OCI-LY7 (cell line): ENCODE measurements at regions of chr7 and their contacts with region 1.

Region 1: DNA sequence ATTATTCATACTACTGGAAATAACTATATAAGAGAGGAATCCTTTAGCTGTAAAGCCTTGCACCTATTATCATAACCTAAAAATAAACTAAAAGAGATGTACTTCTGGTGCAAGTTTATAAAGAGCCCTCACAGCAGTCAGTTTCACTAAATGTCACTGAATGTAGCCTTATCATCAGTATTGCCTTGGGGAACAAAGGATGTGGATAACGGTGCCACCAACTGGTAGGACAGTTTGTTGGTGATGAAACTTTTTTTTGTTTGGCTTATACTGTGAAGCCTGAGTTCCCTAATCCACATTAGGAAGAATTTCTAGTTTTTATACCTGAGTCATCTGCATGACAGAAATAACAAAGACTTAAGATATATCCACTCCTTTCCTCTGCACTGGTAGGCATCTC is 117.9 kb upstream of the COL1A2 start:
- DNase-seq: peak; percentile 38
- H3K4me3 ChIP-seq: no peak overlapping the region
- H3K27ac ChIP-seq: no peak overlapping the region
- H3K4me1 ChIP-seq: no peaks in the 10 kb centered on the region
- CTCF ChIP-seq: peak; percentile 69

Region 2: DNA sequence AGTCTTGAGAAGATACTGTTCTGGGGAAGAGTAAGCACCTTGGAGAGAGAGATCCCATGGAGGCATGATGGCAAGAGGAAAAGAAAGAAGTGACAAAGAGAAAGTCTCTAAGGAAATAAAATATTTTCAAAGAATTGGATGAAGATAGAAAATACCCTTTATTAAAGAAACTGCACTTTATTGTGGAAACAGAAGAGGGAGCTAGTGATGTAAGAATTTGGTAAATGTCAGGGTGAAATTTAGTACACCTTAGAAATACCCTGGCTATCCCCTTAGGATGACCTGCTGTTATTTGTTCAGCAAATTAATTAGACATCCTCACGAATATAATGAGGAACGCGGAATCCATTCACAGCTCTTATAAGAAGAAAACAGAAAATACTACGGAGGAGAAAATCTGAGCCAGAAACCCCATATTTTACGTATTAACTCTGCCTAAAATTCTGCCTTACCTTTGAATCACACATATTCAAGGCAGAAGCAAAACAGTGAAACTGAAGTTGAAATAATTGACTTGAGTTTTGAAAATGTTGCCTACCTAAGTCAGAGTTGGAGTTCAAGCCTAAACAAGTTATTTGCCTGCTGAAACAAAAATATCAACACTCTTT is 476.9 kb before region 1 on chr7:
- CTCF ChIA-PET with region 1: no interaction called
- POLR2A ChIA-PET with region 1: interaction called, 3 read pairs
- intact Hi-C with region 1: loop called (anchors 2 kb)
- DNase-seq: peak; percentile 29
- H3K4me3 ChIP-seq: no peak overlapping the region
- H3K27ac ChIP-seq: no peak overlapping the region
- H3K4me1 ChIP-seq: no peaks in the 10 kb centered on the region
- CTCF ChIP-seq: peak; percentile 83

Region 3: DNA sequence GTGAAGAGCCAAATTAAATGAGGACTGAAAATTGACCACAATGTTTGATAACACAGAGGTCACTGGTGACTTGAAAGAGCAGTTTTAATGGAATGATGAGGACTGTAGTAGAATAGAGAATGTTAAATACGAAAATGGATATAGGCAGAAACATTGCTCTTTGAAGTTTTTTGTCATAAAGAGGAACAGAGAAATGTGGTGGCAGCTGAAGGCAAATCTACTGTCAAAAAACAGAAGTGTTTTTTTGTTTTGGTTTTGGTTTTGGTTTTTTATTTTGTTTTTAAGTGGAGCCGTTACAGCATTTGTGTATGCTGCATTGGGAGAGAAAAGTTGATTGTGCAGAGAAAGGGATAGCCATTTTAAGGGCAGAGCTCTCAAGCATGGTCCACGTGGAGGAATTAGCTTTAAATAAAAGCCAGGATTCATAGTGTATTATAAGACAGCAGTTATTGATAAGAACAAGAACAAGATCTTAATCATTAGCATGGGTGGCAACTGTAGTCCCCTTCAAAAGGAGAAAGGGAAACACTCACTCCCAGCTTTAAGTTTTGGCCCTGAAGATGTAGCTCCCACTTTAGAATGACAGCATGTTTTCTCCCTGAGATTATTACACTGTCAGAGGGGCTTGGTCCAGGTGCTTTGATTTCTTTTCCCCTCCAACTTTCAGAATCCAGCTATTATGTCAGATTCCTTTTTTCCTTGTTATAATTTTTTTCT is 115.9 kb before region 1 on chr7:
- CTCF ChIA-PET with region 1: no interaction called
- POLR2A ChIA-PET with region 1: no interaction called
- intact Hi-C with region 1: no loop called
- DNase-seq: peak; percentile 90
- H3K4me3 ChIP-seq: peak overlapping the region; percentile 53
- H3K27ac ChIP-seq: peak overlapping the region; percentile 91
- H3K4me1 ChIP-seq: peaks cover 38% of the 10 kb centered on the region
- CTCF ChIP-seq: no peak

Region 4: DNA sequence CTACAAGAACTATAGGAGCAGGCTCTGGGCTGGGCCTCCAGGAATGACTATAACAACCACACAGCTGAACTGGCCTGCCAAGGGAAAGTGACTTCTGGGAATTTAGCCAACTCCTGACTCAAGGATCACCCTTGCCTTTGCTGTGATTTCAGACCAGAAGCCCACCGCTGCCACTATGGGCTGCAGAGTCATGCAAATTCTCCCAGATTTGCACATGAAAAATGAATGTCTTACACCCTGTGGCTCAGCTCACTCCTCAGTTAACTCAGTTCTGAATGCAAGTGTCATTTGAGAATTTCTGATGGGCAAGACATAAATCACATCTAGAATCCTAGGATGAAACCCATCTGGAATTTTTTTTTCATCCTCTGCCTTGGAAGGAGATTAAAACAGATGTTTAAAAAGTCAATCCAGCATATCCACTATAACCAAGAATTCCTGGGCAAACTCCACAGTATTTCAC is 86.2 kb before region 1 on chr7:
- CTCF ChIA-PET with region 1: no interaction called
- POLR2A ChIA-PET with region 1: no interaction called
- intact Hi-C with region 1: no loop called
- DNase-seq: no peak
- H3K4me3 ChIP-seq: no peak overlapping the region
- H3K27ac ChIP-seq: no peak overlapping the region
- H3K4me1 ChIP-seq: no peaks in the 10 kb centered on the region
- CTCF ChIP-seq: no peak

Region 5: GRCh38 chr7:94266238-94266644 is 10.6 kb before region 1 on chr7:
- CTCF ChIA-PET with region 1: no interaction called
- POLR2A ChIA-PET with region 1: no interaction called
- intact Hi-C with region 1: no loop called
- DNase-seq: no peak
- H3K4me3 ChIP-seq: no peak overlapping the region
- H3K27ac ChIP-seq: no peak overlapping the region
- H3K4me1 ChIP-seq: no peaks in the 10 kb centered on the region
- CTCF ChIP-seq: no peak

Region 6: GRCh38 chr7:94289071-94289470 is 12.3 kb after region 1 on chr7:
- CTCF ChIA-PET with region 1: no interaction called
- POLR2A ChIA-PET with region 1: no interaction called
- intact Hi-C with region 1: no loop called
- DNase-seq: peak; percentile 4
- H3K4me3 ChIP-seq: no peak overlapping the region
- H3K27ac ChIP-seq: no peak overlapping the region
- H3K4me1 ChIP-seq: no peaks in the 10 kb centered on the region
- CTCF ChIP-seq: peak; percentile 40; the same call in 1 of the 2 replicates